Vagina (tissue), 2 donors: ENCODE measurements at regions of chr11 and their contacts with region 1.

Region 1: GRCh38 chr11:93591247-93591898 is 48.2 kb upstream of the SMCO4 start:
- DNase-seq: no peak
- H3K4me3 ChIP-seq: no peak overlapping the region
- H3K27ac ChIP-seq: no peak overlapping the region
- H3K4me1 ChIP-seq: no peaks in the 10 kb centered on the region
- H3K27me3 ChIP-seq: no peaks in the 10 kb centered on the region
- CTCF ChIP-seq: no peak
- POLR2A ChIP-seq: no peak

Region 2: DNA sequence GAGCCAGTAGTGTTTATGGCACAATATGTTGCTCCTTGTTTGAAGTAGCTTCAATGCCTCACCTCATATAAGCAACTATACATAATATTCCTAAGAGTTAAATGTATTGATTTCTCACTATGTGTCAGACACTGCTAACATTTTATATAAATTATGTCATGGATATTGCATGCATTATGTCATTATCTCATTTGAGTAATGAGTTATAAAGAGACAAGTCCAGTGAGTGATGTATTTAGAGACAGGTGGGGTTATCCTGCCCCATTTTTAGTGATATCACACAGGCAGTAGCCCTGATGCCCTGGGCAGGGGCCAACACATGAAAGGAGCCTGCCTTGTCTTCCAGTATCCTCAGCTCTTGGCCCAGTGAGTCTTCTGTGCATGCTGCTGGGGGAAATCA is 1886.6 kb after region 1 on chr11:
- intact Hi-C with region 1: loop called (anchors 5 kb)
- DNase-seq: no peak
- H3K4me3 ChIP-seq: no peak overlapping the region
- H3K27ac ChIP-seq: no peak overlapping the region
- H3K4me1 ChIP-seq: no peaks in the 10 kb centered on the region
- H3K27me3 ChIP-seq: no peaks in the 10 kb centered on the region
- CTCF ChIP-seq: no peak
- POLR2A ChIP-seq: no peak